Heart right ventricle (tissue), 16 donors: ENCODE measurements at regions of chr1 and their contacts with region 1.

Region 1: GRCh38 chr1:232630047-232630893 is at the start of gene SIPA1L2:
- DNase-seq: peak; percentile 94 to 97
- ATAC-seq: peak; percentile 95 to 98 (median 96)
- H3K4me3 ChIP-seq: peak within 1 kb of the TSS; percentile 57 to 98 (median 86)
- H3K27ac ChIP-seq: peak within 1 kb of the TSS; percentile 63 to 96 (median 94)
- H3K4me1 ChIP-seq: peaks cover 4 to 52% (median 33%) of the 10 kb centered on the region in 9 donors
- H3K27me3 ChIP-seq: no peaks in the 10 kb centered on the region
- CTCF ChIP-seq: peak in 8 of 9 donors; percentile 17 to 71 (median 54)
- total RNA-seq, gene SIPA1L2: 64.9 to 141 (median 101) TPM

Region 2: DNA sequence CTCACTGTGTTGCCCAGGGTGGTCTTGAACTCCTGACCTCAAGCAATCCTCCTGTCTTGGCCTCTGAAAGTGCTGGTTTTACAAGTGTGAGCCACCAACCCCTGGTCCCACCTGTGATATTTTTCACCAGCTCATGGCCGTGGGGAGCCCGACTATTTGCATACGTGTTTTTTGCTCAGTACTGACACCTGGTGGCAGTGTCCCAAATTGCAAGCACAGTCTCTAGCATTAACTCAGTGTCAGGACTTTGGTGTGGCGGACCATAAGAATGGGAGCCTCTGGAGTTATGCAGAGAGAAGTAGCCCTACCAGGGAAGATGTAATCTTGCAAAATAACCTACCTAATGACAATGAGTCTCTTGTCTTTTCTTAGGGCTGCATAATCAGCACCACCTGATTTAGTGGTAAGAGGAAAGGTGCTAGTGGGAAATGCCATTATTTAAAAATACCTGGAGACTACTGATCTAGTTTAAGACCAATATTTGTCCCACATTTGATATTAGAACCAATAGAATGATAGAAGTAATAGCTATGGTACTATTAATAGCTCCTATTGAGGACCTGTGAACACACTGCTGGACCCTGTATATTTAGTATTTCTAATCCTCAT is 698.3 kb before region 1 on chr1:
- intact Hi-C with region 1: loop called in 2 of 10 experiments (anchors 10 kb)
- DNase-seq: no peak
- ATAC-seq: no peak
- H3K4me3 ChIP-seq: no peak overlapping the region
- H3K27ac ChIP-seq: no peak overlapping the region
- H3K4me1 ChIP-seq: peaks cover 15 to 82% (median 62%) of the 10 kb centered on the region in 9 donors
- H3K27me3 ChIP-seq: no peaks in the 10 kb centered on the region
- CTCF ChIP-seq: peak; percentile 11 to 58 (median 38)

Region 3: DNA sequence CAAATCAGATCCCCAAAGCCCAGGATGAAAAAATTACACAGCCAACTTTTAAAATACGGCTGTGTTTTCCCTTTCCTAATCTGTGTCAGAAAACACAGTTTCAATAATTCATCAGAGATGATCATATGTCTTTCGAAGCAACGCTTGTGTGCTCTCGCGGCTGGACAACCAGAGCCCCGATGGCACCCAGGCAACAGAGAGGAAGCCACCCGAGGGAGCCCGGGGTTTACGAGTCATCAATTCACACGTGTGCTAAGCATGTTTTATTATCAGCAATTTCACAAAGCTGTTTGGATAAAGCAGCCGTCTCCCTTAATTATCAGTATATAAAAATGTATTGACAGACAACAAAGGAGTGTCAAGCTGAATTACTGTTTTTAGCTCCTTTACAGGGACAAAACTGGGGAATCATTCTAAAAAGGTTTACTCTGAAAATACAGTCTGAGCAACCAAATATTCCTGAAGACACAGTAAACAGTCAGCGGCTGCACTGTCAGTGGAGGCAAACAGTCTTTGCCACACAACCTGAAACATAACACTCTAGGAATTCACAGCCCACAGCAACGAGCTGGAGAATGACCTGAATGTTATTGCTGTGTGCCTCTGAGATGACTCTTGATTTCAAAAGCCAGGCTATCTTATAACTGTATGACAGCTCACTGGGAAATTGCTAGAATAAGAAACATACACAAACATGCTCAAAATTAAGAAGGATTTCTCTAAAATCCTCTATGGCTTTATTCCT is 201.3 kb before region 1 on chr1:
- intact Hi-C with region 1: loop called in 4 of 10 experiments (anchors 2 to 10 kb)
- DNase-seq: no peak
- ATAC-seq: peak in 5 of 8 donors; percentile 36 to 63 (median 42)
- H3K4me3 ChIP-seq: no peak overlapping the region
- H3K27ac ChIP-seq: peak overlapping the region in 6 of 10 donors; percentile 47 to 68 (median 57)
- H3K4me1 ChIP-seq: peaks cover 0 to 65% (median 31%) of the 10 kb centered on the region in 9 donors
- H3K27me3 ChIP-seq: no peaks in the 10 kb centered on the region
- CTCF ChIP-seq: peak in 1 of 9 donors; percentile 7

Region 4: DNA sequence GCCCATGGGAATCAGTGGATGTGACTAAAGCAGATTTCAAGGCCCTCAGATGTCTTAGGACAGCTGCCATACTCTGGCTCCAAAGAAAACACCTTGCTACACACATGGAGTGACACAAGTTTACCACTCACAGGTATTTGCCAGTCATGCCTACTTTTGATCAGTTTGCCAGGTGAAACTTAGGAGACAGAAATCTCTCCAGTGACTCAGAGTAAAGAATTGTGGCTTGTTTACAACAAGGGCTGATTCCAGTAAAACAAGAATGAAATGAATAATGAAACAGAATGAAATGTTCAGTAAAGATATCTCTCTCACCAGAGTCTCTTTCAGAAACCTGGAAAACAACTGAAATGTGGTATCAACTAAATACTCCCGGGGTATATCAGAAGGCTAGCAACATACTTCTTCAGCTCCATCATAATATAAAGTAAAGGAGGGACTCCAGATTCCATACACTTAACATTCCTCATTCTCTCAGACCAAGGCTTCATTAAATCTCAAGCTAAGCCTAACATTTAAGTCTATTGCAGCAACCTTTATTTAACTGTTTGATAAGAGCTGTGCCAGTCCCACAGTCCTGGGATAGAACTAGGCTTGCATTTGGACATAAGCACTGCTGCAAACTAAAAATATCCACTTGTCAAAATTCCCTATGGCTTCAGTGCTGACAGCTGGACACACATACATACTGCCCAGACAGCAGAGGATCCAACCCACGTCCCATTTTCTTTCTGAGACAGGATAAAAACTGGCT is 143.6 kb before region 1 on chr1:
- intact Hi-C with region 1: loop called in 5 of 10 experiments (anchors 10 kb)
- DNase-seq: no peak
- ATAC-seq: peak; percentile 32 to 89 (median 81)
- H3K4me3 ChIP-seq: no peak overlapping the region
- H3K27ac ChIP-seq: peak overlapping the region; percentile 12 to 82 (median 68)
- H3K4me1 ChIP-seq: peaks cover 0 to 66% (median 28%) of the 10 kb centered on the region in 9 donors
- H3K27me3 ChIP-seq: no peaks in the 10 kb centered on the region
- CTCF ChIP-seq: no peak

Region 5: GRCh38 chr1:232558954-232559353 is 71.3 kb before region 1 on chr1:
- intact Hi-C with region 1: loop called in 2 of 10 experiments (anchors 5 to 10 kb)
- DNase-seq: no peak
- ATAC-seq: no peak
- H3K4me3 ChIP-seq: no peak overlapping the region
- H3K27ac ChIP-seq: peak overlapping the region in 3 of 10 donors; percentile 4 to 52 (median 12)
- H3K4me1 ChIP-seq: peaks cover 9 to 97% (median 80%) of the 10 kb centered on the region in 9 donors
- H3K27me3 ChIP-seq: no peaks in the 10 kb centered on the region
- CTCF ChIP-seq: no peak

Region 6: DNA sequence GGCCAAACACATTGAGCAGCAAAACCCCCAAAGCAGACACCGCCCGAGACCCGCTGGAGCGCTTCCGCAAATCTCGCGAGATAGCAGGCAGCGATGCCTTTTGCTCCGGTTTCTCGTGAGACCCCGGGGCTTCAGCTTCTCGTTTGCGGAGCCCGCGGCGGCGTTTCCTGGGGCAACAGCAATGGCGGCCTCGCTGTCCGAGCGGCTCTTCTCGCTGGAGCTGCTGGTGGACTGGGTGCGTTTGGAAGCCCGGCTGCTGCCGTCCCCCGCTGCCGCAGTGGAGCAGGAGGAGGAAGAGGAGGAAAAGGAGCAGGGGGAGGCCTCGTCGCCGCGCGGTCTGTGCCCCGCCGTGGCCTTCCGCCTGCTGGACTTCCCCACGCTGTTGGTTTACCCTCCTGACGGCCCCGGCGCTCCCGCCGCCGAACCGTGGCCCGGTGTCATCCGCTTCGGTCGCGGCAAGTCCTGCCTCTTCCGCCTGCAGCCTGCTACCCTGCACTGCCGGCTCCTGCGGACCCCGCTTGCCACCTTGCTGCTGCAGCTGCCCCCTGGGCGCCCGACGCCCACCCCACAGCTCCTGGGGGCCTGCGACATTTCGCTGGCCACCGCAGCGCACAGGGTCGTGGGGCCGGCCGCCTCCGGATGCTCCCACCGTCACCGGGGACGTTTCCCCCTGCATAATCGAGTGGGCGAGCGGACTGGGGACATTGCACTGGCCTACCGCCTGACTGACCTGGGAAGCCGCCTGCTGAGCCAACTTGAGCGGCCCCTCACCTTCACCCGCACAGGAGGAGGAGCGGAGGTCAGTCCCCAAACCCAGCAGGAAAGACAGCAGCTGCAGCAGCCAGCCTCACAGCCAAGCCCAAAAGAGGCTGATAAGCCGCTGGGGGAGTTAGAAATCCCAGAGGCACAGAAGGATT is 175.3 kb after region 1 on chr1 and contains the start of gene MAP10:
- intact Hi-C with region 1: loop called in 5 of 10 experiments (anchors 5 to 10 kb)
- DNase-seq: peak; percentile 79 to 83
- ATAC-seq: peak; percentile 86 to 93 (median 90)
- H3K4me3 ChIP-seq: peak within 1 kb of the TSS; percentile 69 to 87 (median 78)
- H3K27ac ChIP-seq: peak within 1 kb of the TSS; percentile 81 to 98 (median 94)
- H3K4me1 ChIP-seq: peaks cover 0 to 57% (median 51%) of the 10 kb centered on the region in 9 donors
- H3K27me3 ChIP-seq: no peaks in the 10 kb centered on the region
- CTCF ChIP-seq: no peak
- total RNA-seq, gene MAP10: 2.5 to 4.8 (median 3.9) TPM

Region 7: GRCh38 chr1:232844791-232845190 is 214.5 kb after region 1 on chr1:
- intact Hi-C with region 1: no loop called
- DNase-seq: no peak
- ATAC-seq: no peak
- H3K4me3 ChIP-seq: no peak overlapping the region
- H3K27ac ChIP-seq: no peak overlapping the region
- H3K4me1 ChIP-seq: peaks cover 0 to 11% (median 0%) of the 10 kb centered on the region in 9 donors
- H3K27me3 ChIP-seq: no peaks in the 10 kb centered on the region
- CTCF ChIP-seq: no peak

Region 8: DNA sequence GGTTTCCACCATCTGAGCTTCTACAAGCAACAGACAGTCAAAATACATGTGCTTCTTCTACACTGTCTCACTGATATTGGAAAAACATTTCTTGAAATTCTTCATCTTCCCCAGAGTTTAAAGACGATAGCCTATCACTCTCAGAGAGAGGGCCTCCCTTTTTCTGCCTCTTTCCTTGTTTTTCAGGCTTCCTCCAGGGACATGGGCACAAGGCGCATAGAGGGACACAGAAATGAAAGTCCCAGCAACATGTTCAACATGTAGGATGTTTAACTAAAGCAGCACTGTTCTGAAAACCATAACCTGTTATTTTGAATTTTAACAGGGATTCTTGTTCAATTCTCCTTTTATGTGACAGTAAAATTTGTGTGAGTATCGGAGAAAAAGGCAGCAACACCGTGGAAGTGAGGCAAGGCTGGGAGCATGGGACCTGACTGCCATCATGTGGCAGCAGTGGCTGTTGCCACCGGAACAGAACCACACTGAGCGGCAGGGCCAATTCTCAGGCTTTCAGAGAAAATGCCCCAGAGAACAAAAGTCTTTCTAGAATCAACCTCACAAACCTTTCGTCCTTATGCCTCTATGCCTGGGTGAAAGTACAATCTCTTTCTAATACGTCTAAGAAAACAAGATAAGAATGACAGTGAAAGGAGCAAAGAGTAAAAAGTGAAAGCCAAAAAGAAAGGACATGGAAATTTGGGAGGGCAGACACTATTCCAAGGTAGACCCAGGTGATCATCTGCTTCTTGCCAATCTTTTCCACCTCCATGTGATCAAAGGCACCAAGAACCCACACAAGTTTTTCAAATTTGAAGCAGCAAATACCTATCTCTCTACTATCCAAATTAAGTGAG is 610.8 kb after region 1 on chr1:
- intact Hi-C with region 1: loop called in 6 of 10 experiments (anchors 1 to 10 kb)
- DNase-seq: peak; percentile 54 to 56
- ATAC-seq: peak; percentile 84 to 92 (median 88)
- H3K4me3 ChIP-seq: peak overlapping the region in 3 of 10 donors; percentile 2 to 21 (median 6)
- H3K27ac ChIP-seq: no peak overlapping the region
- H3K4me1 ChIP-seq: peaks cover 0 to 39% (median 9%) of the 10 kb centered on the region in 9 donors
- H3K27me3 ChIP-seq: no peaks in the 10 kb centered on the region
- CTCF ChIP-seq: peak; percentile 61 to 93 (median 84)